Activated CD4-positive, alpha-beta memory T cell treated with anti-CD3 and anti-CD28 coated beads for 36 hours (primary cell): ENCODE measurements at regions of chr2 and their contacts with region 1.

Region 1: GRCh38 chr2:180980106-180980942 is at the start of gene UBE2E3:
- DNase-seq: peak; percentile 88
- H3K4me3 Mint-ChIP-seq: peak within 1 kb of the TSS; percentile 96
- H3K27ac Mint-ChIP-seq: peak within 1 kb of the TSS; percentile 87
- H3K4me1 Mint-ChIP-seq: peaks cover 37% of the 10 kb centered on the region
- H3K27me3 Mint-ChIP-seq: no peaks in the 10 kb centered on the region
- total RNA-seq, gene UBE2E3: 33.0 to 34.1 TPM

Region 2: DNA sequence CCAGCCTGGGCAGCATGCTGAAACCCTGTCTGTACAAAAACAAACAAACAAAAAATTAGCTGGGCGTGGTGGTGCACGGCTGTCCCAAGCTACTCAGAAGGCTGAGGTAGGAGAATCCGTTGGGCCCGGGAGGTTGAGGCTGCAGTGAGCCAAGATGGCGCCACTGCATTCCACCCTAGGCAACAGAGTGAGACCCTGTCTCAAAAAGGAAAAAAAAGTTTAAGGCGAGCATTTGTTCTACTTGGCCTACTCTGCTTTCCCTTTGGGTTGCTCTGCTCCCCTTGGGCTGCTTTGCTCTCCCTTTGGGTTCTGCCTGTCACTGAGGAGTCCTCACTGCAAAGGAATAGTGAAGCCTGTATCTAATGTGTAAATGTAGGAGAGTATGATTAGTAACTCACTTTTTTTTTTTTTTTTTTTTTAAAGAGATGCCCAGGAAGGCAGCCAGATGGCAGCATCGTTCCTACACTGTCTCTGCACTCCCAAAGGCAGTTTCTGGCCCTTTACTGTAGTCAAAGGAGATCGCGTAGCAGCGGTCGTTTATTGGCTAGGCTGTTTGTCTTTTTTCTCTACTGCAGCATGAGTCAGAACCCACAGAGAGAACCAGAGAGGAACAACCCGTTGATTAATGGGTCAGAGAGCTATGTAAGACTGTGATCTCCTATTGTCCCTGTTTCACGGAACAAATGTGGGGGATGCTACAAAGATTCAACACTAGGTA is 854.9 kb before region 1 on chr2:
- CTCF ChIA-PET with region 1: interaction called, 6 read pairs
- POLR2A ChIA-PET with region 1: no interaction called
- intact Hi-C with region 1: loop called (anchors 2 kb)
- DNase-seq: peak; percentile 59
- H3K4me3 Mint-ChIP-seq: no peak overlapping the region
- H3K27ac Mint-ChIP-seq: no peak overlapping the region
- H3K4me1 Mint-ChIP-seq: no peaks in the 10 kb centered on the region
- H3K27me3 Mint-ChIP-seq: no peaks in the 10 kb centered on the region

Region 3: GRCh38 chr2:180970016-180970415 is 10.3 kb before region 1 on chr2:
- CTCF ChIA-PET with region 1: interaction called, 14 read pairs
- POLR2A ChIA-PET with region 1: interaction called, 7 read pairs
- intact Hi-C with region 1: no loop called
- DNase-seq: no peak
- H3K4me3 Mint-ChIP-seq: no peak overlapping the region
- H3K27ac Mint-ChIP-seq: no peak overlapping the region
- H3K4me1 Mint-ChIP-seq: no peaks in the 10 kb centered on the region
- H3K27me3 Mint-ChIP-seq: no peaks in the 10 kb centered on the region

Region 4: GRCh38 chr2:181036848-181037603 is 56.7 kb after region 1 on chr2:
- CTCF ChIA-PET with region 1: interaction called, 7 read pairs
- POLR2A ChIA-PET with region 1: no interaction called
- intact Hi-C with region 1: loop called (anchors 5 kb)
- DNase-seq: peak; percentile 24
- H3K4me3 Mint-ChIP-seq: no peak overlapping the region
- H3K27ac Mint-ChIP-seq: no peak overlapping the region
- H3K4me1 Mint-ChIP-seq: peaks cover 24% of the 10 kb centered on the region
- H3K27me3 Mint-ChIP-seq: no peaks in the 10 kb centered on the region

Region 5: DNA sequence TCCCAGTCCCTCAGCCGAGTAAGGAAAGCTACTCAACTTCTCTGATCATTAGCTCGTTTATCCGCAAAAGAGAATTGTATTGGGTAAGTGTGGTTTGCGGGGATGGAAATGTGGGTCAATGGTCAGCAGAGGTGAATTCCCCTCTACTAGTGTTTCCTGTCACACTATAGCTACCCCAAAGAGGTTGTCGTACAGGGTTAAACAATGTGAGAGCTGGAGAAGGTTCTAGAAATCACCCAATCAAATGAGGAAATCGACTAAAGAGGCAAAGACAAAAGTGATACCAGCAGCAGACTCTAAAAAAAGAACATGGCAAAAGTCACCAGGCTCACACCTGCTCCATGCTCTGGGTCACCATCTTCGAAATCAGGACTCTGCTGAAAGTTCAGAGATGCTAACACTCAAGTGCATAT is 332.2 kb after region 1 on chr2:
- CTCF ChIA-PET with region 1: no interaction called
- POLR2A ChIA-PET with region 1: no interaction called
- intact Hi-C with region 1: loop called (anchors 5 kb)
- DNase-seq: peak; percentile 68
- H3K4me3 Mint-ChIP-seq: peak overlapping the region; percentile 65
- H3K27ac Mint-ChIP-seq: peak overlapping the region; percentile 87
- H3K4me1 Mint-ChIP-seq: peaks cover 43% of the 10 kb centered on the region
- H3K27me3 Mint-ChIP-seq: no peaks in the 10 kb centered on the region

Region 6: GRCh38 chr2:181891966-181892798 is 911.9 kb after region 1 on chr2:
- CTCF ChIA-PET with region 1: no interaction called
- POLR2A ChIA-PET with region 1: no interaction called
- intact Hi-C with region 1: loop called (anchors 10 kb)
- DNase-seq: peak; percentile 68
- H3K4me3 Mint-ChIP-seq: peak overlapping the region; percentile 96
- H3K27ac Mint-ChIP-seq: peak overlapping the region; percentile 77
- H3K4me1 Mint-ChIP-seq: peaks cover 23% of the 10 kb centered on the region
- H3K27me3 Mint-ChIP-seq: peaks cover 7% of the 10 kb centered on the region